Gastrocnemius medialis (tissue), 4 donors: ENCODE measurements at regions of chr1 and their contacts with region 1.

Region 1: GRCh38 chr1:8497210-8497801 is 179.4 kb downstream of the SLC45A1 start:
- DNase-seq: no peak
- ATAC-seq: peak; percentile 92 to 94
- H3K4me3 ChIP-seq: no peak overlapping the region
- H3K27ac ChIP-seq: peak overlapping the region; percentile 75 to 85 (median 84)
- H3K4me1 ChIP-seq: peaks cover 38 to 51% of the 10 kb centered on the region in 2 donors
- H3K27me3 ChIP-seq: no peaks in the 10 kb centered on the region
- CTCF ChIP-seq: no peak
- POLR2A ChIP-seq: peak in 1 of 2 donors; percentile 12

Region 2: DNA sequence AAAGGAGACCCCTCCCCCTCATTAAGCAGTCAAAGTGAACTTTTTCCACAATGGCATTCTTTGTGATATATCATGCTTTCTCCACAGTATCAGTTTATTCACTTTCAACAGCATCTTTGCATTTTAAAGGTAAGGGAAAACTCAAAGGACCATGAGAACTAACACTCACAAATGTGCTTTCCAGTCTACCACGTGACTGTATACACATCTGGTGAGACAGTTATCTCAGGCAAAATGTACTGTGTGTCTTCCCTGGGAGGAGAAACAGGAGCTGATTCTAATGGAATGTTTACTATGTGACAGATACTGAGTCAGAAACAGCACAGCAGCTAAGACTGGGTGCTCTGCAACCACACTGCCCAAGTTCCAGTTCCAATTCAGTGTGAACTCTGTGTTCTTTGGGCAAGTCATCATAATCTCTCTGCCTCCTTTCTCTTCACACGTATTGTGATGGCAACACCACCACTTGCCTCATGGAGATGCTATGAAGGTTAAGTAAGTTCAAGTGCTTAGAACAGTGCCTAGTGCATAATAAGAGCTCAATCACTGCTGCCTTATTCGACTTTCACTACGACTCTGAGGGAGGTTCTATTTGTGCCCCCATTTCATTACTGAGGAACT is 100.4 kb before region 1 on chr1:
- in situ Hi-C with region 1: no loop called
- intact Hi-C with region 1: no loop called
- DNase-seq: peak; percentile 87 to 88
- ATAC-seq: peak; percentile 92 to 94
- H3K4me3 ChIP-seq: peak overlapping the region in 3 of 4 donors; percentile 5 to 22 (median 7)
- H3K27ac ChIP-seq: peak overlapping the region; percentile 86 to 92 (median 88)
- H3K4me1 ChIP-seq: peaks cover 87 to 96% of the 10 kb centered on the region in 2 donors
- H3K27me3 ChIP-seq: no peaks in the 10 kb centered on the region
- CTCF ChIP-seq: no peak
- POLR2A ChIP-seq: peak in 1 of 2 donors; percentile 58

Region 3: DNA sequence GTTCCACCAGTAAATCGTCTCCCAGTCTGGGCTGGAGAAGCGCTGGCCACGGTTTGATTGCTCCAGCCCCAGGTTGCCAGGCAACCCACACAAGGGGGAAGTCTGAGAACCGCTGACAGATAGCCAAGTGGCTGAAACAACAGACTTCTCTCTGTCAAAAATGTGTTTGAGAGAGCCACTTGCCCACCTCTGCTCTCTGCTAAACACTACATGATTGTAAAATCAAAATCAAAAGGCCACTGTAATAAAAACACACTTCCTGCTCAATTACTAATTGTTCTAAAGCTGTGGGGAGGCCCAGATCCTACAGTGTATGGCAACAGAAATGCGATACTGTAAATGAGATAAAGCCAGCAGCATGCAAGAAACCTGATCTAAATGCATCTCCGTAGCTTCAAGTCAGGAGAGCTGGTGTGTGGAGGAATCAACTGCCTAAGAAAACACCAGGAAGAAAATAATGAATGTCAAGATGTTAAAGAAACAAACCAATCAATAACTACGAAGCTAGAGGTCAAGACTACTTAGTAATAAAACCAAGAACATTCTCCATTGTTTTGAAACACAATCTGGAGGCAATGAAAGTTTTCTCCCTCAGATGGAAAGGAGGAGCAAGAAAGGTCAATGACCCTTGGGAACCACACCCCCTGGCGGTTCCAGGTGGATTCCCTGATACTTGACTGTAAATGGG is 58.1 kb before region 1 on chr1:
- in situ Hi-C with region 1: loop called in 1 of 4 experiments (anchors 5 kb)
- intact Hi-C with region 1: loop called (anchors 5 kb)
- DNase-seq: peak; percentile 68 to 71
- ATAC-seq: peak; percentile 49 to 83
- H3K4me3 ChIP-seq: no peak overlapping the region
- H3K27ac ChIP-seq: peak overlapping the region; percentile 73 to 85 (median 80)
- H3K4me1 ChIP-seq: peaks cover 42 to 46% of the 10 kb centered on the region in 2 donors
- H3K27me3 ChIP-seq: no peaks in the 10 kb centered on the region
- CTCF ChIP-seq: peak in 4 of 5 experiments; percentile 10 to 28 (median 20)
- POLR2A ChIP-seq: no peak

Region 4: GRCh38 chr1:8477166-8477982 is 19.9 kb before region 1 on chr1:
- in situ Hi-C with region 1: no loop called
- intact Hi-C with region 1: no loop called
- DNase-seq: no peak
- ATAC-seq: no peak
- H3K4me3 ChIP-seq: no peak overlapping the region
- H3K27ac ChIP-seq: peak overlapping the region in 3 of 4 donors; percentile 2 to 31 (median 2)
- H3K4me1 ChIP-seq: peaks cover 12 to 46% of the 10 kb centered on the region in 2 donors
- H3K27me3 ChIP-seq: no peaks in the 10 kb centered on the region
- CTCF ChIP-seq: no peak
- POLR2A ChIP-seq: no peak

Region 5: DNA sequence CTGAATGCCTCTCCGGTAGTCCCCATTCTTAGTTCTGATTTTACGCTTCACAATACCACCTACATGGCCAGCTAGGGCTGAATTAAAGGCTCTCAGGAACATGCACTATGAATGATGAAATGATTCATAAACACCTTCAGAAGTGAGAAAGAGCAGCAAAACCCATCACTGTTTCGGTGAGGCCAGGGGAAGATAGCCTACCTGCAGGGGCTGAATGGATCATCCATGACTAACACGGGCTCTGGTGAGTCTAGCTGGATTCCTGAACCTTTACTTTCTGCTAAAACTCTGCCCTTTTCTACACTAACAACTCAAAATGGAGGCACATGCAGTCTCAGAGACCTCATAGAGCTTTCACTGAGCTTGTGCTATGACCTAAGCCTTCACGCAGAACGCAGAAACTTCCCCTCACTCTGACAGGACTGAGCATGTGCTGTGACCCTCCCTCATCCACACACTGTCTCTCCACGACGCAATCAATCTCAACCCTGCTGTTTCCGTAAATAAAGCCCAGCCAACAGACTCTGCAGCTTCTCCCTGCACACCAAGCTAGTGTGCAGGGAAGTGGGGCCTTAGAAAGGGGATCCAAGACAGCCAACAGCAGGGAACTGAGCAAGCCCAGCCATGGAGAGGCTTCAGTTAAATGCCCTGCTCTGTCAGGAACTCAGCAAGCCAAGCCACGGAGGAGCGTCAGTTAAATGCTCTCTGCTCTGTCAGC is 28.4 kb after region 1 on chr1:
- in situ Hi-C with region 1: no loop called
- intact Hi-C with region 1: loop called (anchors 1 kb)
- DNase-seq: peak; percentile 90 to 91
- ATAC-seq: peak; percentile 97 to 99
- H3K4me3 ChIP-seq: peak overlapping the region; percentile 62 to 70 (median 66)
- H3K27ac ChIP-seq: peak overlapping the region; percentile 88 to 93 (median 92)
- H3K4me1 ChIP-seq: peaks cover 38 to 39% of the 10 kb centered on the region in 2 donors
- H3K27me3 ChIP-seq: no peaks in the 10 kb centered on the region
- CTCF ChIP-seq: no peak
- POLR2A ChIP-seq: peak; percentile 52 to 87